ENCODE measurements at regions of chr5 and their contacts with region 1.

Region 1: DNA sequence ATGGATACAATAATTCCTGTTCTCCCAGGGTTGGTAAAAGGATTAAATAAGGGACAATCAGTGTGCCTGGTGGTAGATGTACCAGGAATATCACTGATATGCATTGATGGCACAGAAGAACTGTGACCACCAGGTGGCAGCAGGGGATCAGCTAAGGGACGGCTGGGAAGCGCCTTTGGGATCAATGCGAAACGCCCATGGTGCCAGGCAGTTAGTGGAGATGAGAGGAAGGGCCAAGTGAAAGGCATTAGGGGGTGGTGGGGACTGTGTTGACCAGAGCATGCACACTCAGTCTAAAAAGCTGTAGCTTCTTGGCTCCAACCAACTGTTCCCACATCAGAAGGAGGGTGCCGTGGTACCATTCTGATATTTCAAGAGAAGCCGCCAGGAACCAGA is 55.6 kb downstream of the ARHGEF37 start:
- DNase-seq: peak; percentile 56
- H3K4me3 ChIP-seq: no peak overlapping the region
- H3K27ac ChIP-seq: peak overlapping the region; percentile 97
- H3K4me1 ChIP-seq: peaks cover 49% of the 10 kb centered on the region
- H3K27me3 ChIP-seq: no peaks in the 10 kb centered on the region
- CTCF ChIP-seq: peak; percentile 78 to 85

Region 2: GRCh38 chr5:149053072-149053695 is 583.7 kb before region 1 on chr5:
- CTCF ChIA-PET with region 1: no interaction called
- dilution Hi-C with region 1: no loop called
- in situ Hi-C with region 1: no loop called
- intact Hi-C with region 1: no loop called
- DNase-seq: peak; percentile 65
- H3K4me3 ChIP-seq: no peak overlapping the region
- H3K27ac ChIP-seq: peak overlapping the region; percentile 27
- H3K4me1 ChIP-seq: peaks cover 11% of the 10 kb centered on the region
- H3K27me3 ChIP-seq: no peaks in the 10 kb centered on the region
- CTCF ChIP-seq: no peak

Region 3: DNA sequence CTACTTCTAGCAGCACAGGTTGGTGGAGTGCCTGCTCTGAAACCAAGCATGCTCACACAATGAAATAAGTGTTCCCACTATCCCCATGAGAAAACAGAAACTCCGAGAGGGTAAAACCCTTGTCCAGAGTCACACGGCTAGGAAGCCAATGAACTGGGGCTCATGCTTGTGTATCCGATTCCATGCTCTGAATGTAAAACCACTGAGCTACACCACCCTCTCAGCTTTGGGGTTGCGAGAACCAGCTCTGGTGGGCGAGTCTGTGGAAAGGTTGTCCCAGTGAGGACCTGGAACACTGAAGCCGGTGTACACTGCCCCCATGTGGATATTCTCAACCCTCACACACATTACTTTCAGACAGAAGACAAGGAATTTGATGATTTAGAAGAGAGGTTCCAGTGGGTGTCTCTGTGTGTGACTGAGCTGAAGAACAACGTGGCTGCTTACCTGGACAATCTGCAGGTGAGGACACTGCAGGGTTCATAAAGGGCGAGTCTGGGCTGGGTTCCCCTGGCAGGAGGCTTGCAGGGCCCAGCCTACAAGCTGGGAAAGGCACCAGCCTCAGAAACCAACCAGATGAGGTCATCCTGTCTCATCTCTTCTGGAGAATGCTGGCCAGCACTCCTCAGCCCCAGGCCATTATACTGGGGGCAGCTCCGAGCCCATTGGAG is 18.1 kb before region 1 on chr5:
- CTCF ChIA-PET with region 1: interaction called, 5 read pairs
- dilution Hi-C with region 1: no loop called
- in situ Hi-C with region 1: no loop called
- intact Hi-C with region 1: loop called (anchors 1 kb)
- DNase-seq: peak; percentile 99
- H3K4me3 ChIP-seq: no peak overlapping the region
- H3K27ac ChIP-seq: peak overlapping the region; percentile 82
- H3K4me1 ChIP-seq: peaks cover 24% of the 10 kb centered on the region
- H3K27me3 ChIP-seq: no peaks in the 10 kb centered on the region
- CTCF ChIP-seq: peak; percentile 73 to 75

Region 4: DNA sequence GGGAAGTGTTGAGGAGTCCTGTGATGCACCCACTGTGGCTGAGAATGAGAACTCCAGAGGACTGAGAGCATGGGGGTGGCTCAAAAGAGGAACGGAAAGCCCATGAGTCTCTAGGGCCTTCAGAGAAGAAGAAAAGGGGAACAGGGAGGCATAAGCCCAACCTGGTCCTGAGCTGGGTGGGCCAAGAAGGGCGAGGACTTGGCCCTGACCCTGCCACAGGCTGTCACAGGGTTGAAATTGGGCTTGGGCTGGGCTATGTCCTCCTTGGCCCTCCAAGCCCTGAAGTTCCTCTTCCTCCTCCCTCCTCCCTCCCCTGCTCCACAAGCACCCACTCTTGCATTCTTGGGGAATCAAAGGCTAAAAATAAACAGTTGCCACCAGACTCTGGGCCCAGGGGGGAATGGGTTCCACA is 44.0 kb after region 1 on chr5:
- CTCF ChIA-PET with region 1: no interaction called
- dilution Hi-C with region 1: no loop called
- in situ Hi-C with region 1: no loop called
- intact Hi-C with region 1: no loop called
- DNase-seq: no peak
- H3K4me3 ChIP-seq: no peak overlapping the region
- H3K27ac ChIP-seq: no peak overlapping the region
- H3K4me1 ChIP-seq: no peaks in the 10 kb centered on the region
- H3K27me3 ChIP-seq: no peaks in the 10 kb centered on the region
- CTCF ChIP-seq: no peak

Region 5: DNA sequence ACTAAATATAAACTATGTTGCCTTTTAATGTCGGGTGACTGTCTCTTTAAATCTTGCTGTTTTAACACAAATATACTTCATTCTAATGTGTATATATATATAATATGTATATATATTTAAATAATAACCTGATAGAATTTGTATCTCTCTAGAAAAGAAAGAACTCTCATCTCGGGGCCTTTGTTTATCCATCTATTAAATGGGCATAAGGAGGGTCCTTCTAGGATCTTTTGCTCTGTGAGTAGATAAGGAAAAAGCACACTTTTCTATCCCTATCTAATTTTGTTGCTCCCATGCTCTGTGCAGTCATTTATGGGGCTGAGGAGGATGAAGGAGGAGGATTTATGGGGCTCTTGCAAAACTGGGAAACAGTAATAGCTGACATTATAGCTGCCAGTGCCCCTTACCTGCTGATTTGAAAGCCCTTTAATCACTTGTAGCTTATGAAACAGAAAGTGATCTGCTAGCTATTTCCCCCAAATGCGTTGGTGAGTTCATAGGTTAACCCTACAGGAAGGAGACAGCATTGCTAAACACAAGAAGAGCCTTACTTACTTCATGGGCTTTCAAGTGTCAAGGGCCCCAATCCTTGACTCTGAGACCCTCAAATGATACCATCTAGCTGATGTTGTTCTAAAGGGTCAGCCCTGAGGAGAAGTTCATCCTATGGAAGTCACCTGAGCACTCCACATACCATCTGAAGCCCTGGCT is 87.4 kb after region 1 on chr5:
- CTCF ChIA-PET with region 1: no interaction called
- dilution Hi-C with region 1: no loop called
- in situ Hi-C with region 1: no loop called
- intact Hi-C with region 1: no loop called
- DNase-seq: no peak
- H3K4me3 ChIP-seq: no peak overlapping the region
- H3K27ac ChIP-seq: no peak overlapping the region
- H3K4me1 ChIP-seq: peaks cover 17% of the 10 kb centered on the region
- H3K27me3 ChIP-seq: no peaks in the 10 kb centered on the region
- CTCF ChIP-seq: no peak

Region 6: DNA sequence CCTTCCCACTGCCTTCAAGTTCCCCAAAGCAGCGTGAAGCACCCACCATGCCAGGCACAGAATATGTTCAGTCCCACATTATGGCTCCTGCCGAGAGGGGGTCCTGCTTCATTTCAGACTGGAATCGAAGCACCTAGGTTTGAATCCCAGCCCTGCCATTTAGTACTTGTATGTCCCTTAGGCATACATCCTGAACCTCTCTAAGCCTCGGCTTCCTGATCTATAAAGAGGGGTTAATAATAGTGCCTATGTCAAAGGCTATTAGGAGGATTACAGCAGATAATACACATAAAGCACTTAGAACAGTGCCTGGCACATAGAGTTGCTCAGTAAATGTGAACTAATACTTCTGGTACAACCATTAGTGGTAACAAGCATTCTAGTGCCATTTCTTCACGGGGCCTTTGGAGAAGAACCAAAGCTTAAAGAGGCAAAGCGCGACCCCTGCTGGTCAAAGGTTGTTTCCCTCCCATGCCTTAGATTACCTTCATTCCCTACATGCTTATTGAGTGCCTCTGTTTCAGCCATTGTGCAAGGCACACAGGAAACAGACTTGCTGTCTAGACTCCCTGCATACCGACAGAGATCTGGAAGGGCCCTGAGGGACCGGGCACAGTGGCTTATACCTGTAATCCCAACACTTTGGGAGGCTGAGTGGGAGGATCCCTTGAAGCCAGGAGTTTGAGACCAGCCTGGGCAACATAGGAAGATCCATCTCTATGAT is 191.5 kb after region 1 on chr5:
- CTCF ChIA-PET with region 1: interaction called, 5 read pairs
- dilution Hi-C with region 1: no loop called
- in situ Hi-C with region 1: loop called in 1 of 2 experiments (anchors 5 kb)
- intact Hi-C with region 1: loop called (anchors 1 kb)
- DNase-seq: peak; percentile 89
- H3K4me3 ChIP-seq: no peak overlapping the region
- H3K27ac ChIP-seq: no peak overlapping the region
- H3K4me1 ChIP-seq: no peaks in the 10 kb centered on the region
- H3K27me3 ChIP-seq: no peaks in the 10 kb centered on the region
- CTCF ChIP-seq: peak; percentile 90 to 95

Region 7: DNA sequence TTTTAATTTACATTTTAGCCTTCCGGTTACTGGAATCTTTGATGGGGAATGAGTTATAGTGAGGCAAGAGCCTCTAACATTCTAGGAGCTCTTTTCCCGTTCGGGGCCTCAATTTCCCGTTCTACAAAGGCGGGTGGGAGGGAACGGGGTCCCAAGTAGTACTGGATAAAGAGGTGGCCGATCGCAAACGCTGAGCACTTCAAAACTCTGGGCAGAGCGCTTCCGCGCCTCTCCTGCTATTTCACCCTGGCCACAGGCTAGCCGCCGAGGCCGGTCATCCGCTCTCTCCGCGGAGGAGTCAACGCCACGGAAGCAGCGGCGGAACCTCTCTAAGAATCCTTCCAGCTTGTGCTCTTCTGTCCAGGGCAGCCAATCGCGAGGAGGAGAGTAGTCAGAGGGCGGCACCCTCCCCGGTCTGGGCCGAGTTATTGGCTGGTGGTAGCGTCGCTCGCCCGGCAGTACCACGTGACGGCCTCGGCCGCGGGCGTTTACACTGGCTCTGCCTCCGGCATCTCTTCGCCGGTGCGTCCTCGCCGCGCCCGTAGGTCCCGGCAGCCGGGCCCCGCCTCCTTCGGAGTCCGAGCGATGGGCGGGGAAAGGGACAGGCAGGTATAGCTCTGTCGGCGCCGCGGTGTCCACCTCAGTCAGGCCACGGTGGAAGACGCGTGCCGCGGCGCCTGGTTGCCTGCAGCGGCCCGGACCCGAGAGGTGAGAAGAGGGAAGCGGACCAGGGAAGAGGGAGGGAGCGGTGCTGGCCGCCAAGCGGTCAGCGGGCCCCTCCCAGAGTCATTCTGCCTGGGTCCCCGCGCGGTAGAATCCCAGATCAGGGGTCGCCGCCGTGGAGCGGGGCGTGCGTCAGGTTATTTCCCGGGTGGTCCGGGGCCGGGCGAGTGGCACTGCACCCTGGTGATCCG is 323.7 kb after region 1 on chr5 and contains the start of gene SLC26A2:
- CTCF ChIA-PET with region 1: no interaction called
- dilution Hi-C with region 1: no loop called
- in situ Hi-C with region 1: no loop called
- intact Hi-C with region 1: loop called (anchors 1 kb)
- DNase-seq: peak; percentile 98
- H3K4me3 ChIP-seq: peak within 1 kb of the TSS; percentile 58 to 78 (median 74)
- H3K27ac ChIP-seq: peak within 1 kb of the TSS; percentile 75
- H3K4me1 ChIP-seq: peaks cover 23% of the 10 kb centered on the region
- H3K27me3 ChIP-seq: no peaks in the 10 kb centered on the region
- CTCF ChIP-seq: no peak
- total RNA-seq, gene SLC26A2: 18.1 to 63.2 TPM

Region 8: DNA sequence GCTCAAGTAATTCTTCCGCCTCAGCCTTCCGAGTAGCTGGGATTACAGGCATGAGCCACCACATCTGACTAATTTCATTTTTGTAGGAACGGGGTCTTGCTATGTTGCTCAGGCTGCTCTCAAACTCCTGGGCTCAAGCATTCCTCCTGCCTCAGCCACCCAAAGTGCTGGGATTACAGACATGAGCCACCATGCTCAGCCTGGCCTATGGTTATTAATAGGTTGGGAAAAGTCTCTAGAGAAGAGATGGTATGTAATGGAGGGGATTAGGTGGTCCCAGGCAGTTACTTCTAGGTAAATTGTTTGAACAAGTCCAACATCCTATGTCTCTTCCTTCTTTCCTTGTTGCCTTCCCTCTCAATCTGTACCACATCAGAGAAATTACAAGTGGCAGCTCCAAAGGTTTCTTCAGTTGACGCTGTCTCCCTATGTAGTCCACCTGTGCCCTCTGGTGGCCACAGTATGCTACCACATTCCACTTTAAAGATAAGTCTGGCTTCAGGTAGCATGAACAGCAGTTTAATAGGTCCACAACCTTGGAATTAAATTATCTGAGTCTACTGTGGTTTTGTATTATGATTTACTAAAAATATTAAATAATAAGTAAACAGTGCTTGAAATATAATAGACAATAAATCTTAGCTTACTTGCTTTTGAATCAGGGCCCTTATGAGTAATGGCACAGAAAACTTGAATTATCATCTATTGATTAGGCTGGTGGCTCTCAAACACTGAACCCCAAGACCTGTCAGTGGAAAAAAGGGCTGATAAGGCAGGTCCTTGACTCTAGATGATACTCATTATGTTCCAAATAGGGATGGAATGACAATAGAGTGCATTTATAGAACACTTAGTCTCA is 353.9 kb after region 1 on chr5:
- CTCF ChIA-PET with region 1: no interaction called
- dilution Hi-C with region 1: no loop called
- in situ Hi-C with region 1: loop called (anchors 10 kb)
- intact Hi-C with region 1: loop called (anchors 1 kb)
- DNase-seq: peak; percentile 57
- H3K4me3 ChIP-seq: no peak overlapping the region
- H3K27ac ChIP-seq: no peak overlapping the region
- H3K4me1 ChIP-seq: no peaks in the 10 kb centered on the region
- H3K27me3 ChIP-seq: no peaks in the 10 kb centered on the region
- CTCF ChIP-seq: peak; percentile 96 to 97